Gastrocnemius medialis (tissue), 4 donors: ENCODE measurements at regions of chr5 and their contacts with region 1.

Region 1: DNA sequence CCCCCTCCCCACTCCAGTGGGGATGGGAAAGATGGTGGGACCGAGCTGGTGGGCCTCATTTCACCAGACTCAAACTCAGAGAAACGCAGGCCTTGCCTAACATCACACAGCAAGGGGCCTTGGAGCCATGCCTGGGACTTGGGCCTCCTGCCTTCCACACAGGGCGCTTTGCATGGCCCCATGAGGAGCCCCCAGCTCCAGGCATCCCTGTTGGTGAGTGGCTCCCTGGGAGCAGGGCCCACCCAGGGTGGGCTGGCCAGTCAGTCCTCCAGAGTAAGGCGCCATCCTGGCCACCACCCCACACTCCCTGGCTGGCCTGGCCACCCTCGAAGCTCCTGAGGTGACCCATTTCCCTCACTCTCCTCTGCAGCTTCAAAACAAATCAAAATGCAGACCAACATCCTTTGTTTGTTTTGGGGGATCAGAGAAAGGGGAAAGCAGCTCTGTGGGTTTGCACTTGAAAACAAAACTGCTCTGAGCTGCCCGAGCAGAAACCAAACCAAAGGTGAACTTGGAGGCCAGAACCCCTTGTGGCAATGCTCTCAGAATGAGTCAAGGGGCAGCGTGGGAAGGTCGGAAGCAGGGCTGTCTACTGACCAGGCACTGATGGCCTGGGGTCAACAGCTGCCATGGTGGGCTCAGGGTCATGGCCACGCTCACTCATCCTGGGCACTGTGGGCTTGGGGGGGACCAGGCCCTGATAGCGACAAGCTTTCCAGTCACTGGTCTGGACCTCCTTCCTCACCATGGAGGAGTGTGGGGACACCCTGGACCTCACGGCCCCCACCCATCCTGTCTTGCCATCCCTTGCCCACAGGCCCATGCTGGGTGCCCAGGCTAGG is 37.0 kb upstream of the VDAC1 start:
- DNase-seq: no peak
- ATAC-seq: no peak
- H3K4me3 ChIP-seq: no peak overlapping the region
- H3K27ac ChIP-seq: no peak overlapping the region
- H3K4me1 ChIP-seq: no peaks in the 10 kb centered on the region
- H3K27me3 ChIP-seq: no peaks in the 10 kb centered on the region
- CTCF ChIP-seq: no peak
- POLR2A ChIP-seq: no peak

Region 2: DNA sequence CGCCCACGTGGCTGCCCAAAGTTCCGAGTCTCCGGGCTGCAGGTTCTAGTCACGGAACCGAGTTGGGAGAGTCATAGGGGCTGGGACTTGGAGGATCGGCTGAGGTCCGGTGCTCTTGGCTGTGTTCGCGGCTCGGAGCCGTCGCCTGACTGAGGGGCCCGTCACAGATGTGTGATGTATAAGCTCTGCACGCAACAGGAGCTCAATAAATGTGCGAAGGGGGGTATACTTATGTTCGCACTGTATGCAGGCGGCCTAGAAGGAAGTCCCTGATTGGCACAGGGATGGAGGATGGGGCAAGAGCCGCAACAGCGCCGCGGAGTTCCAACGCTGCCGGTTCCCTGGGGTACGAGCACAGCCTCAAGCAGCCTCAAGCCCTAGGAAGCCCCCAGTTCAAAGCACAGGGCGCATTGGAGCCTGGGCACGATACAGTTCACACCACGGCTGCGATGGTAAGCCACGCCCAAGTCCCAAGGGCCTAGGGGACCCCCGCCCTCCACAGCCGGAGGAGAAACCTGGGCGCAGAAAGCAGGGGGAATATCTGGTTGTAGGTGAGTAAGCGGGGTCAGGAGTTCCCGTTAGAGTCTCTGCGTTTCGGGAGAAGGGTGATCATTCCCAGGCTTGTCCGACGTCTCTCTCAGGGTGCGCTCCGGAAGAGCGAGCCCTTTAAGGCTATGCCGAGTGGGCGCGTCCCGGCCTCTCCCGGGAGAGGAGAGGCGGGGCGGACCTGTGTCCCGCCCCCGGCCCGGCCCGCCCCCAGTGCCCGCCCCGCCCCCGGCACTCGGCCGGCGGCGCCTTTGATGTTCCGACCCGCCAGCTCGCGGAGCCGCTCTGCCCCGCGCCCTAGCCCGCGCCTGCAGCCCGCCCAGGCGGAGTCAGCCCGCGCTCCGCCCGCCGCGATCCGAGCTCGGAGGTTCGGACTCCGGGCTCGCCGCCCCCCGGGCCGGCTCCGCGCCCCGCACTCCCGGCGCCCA is 72.4 kb after region 1 on chr5 and contains the start of gene TCF7:
- in situ Hi-C with region 1: no loop called
- intact Hi-C with region 1: loop called (anchors 2 kb)
- DNase-seq: peak; percentile 56 to 58
- ATAC-seq: peak; percentile 88 to 89
- H3K4me3 ChIP-seq: peak within 1 kb of the TSS; percentile 65 to 79 (median 68)
- H3K27ac ChIP-seq: no peak within 1 kb of the TSS
- H3K4me1 ChIP-seq: peaks cover 9 to 19% of the 10 kb centered on the region in 2 donors
- H3K27me3 ChIP-seq: peaks cover 9 to 19% (median 16%) of the 10 kb centered on the region in 3 donors
- CTCF ChIP-seq: no peak
- POLR2A ChIP-seq: peak in 1 of 2 donors; percentile 36
- total RNA-seq, gene TCF7: 0.25 to 2.1 (median 0.66) TPM